Right cardiac atrium (tissue), 5 donors: ENCODE measurements at regions of chr15 and their contacts with region 1.

Region 1: DNA sequence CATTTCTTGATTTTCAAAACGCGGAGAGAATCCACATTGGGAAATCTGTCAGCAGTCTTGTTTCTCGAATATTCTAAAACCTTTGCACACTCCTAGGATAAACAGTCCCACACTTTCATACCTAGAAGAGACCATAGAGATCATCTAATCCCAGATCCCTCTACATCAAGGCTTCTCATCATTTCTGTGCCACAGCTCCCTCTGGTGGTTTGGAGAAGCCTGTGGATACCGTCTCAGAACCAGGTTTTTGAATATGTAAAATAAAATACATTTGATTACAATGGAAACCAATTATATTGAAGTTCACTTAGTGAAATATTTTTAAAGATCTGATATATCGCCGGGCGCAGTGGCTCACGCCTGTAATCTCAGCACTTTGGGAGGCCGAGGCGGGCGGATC is 211.9 kb upstream of the GOLGA6L4 start:
- DNase-seq: peak in 2 of 3 donors; percentile 28 to 50
- ATAC-seq: no peak
- H3K4me3 ChIP-seq: no peak overlapping the region
- H3K27ac ChIP-seq: no peak overlapping the region
- H3K4me1 ChIP-seq: no peaks in the 10 kb centered on the region
- H3K27me3 ChIP-seq: no peaks in the 10 kb centered on the region

Region 2: DNA sequence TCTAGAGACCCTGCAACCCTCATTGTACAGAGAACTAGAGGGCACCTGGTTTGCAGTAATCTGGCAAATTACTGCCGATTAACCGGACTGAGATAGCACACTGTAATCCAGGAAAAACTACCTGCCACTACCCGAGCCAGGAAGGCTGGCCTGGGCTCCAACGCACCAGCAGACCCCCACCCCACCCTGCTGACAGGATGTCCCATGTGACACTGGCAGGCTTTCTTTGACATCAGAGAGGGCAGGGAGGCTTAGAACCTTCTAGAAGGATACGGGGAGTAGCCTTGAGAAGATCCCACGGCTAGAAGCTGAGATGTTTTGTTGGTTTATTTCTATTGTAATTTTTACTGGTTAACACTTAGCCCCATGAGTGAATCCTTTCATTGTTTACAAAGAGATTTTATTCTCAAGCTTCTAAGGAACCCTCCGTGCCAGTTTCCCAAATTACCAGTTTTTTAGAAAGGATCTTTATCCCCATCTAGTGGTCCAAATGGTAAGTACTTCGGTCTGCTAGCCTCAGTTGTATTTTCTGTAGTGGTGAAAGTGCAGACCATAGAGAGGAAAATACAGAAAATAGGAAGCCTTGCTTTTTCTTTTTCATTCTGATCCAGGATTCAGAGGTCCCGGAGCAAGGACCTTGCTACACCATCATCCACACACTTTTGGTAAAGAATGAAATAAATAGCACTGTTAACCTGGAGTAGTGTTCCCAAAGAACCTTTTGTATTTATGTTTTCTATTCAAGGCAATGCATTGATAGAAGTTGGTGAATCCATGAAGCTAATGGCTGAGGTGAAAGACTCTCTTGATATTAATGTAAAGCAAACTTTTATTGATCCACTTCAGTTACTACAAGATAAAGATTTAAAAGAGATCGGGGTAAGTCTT is 451.6 kb before region 1 on chr15:
- intact Hi-C with region 1: loop called in 2 of 4 experiments (anchors 10 kb)
- DNase-seq: no peak
- ATAC-seq: peak in 1 of 2 donors; percentile 43
- H3K4me3 ChIP-seq: no peak overlapping the region
- H3K27ac ChIP-seq: no peak overlapping the region
- H3K4me1 ChIP-seq: no peaks in the 10 kb centered on the region
- H3K27me3 ChIP-seq: no peaks in the 10 kb centered on the region

Region 3: GRCh38 chr15:83644439-83644838 is 379.2 kb before region 1 on chr15:
- intact Hi-C with region 1: no loop called
- DNase-seq: no peak
- ATAC-seq: no peak
- H3K4me3 ChIP-seq: no peak overlapping the region
- H3K27ac ChIP-seq: no peak overlapping the region
- H3K4me1 ChIP-seq: no peaks in the 10 kb centered on the region
- H3K27me3 ChIP-seq: no peaks in the 10 kb centered on the region